Lower leg skin (tissue), 4 donors: ENCODE measurements at regions of chr6 and their contacts with region 1.

Region 1: GRCh38 chr6:166402582-166403277 is 20.0 kb upstream of the MPC1 start:
- DNase-seq: peak in 1 of 2 donors; percentile 54
- H3K4me3 ChIP-seq: no peak overlapping the region
- CTCF ChIP-seq: no peak
- POLR2A ChIP-seq: no peak

Region 2: DNA sequence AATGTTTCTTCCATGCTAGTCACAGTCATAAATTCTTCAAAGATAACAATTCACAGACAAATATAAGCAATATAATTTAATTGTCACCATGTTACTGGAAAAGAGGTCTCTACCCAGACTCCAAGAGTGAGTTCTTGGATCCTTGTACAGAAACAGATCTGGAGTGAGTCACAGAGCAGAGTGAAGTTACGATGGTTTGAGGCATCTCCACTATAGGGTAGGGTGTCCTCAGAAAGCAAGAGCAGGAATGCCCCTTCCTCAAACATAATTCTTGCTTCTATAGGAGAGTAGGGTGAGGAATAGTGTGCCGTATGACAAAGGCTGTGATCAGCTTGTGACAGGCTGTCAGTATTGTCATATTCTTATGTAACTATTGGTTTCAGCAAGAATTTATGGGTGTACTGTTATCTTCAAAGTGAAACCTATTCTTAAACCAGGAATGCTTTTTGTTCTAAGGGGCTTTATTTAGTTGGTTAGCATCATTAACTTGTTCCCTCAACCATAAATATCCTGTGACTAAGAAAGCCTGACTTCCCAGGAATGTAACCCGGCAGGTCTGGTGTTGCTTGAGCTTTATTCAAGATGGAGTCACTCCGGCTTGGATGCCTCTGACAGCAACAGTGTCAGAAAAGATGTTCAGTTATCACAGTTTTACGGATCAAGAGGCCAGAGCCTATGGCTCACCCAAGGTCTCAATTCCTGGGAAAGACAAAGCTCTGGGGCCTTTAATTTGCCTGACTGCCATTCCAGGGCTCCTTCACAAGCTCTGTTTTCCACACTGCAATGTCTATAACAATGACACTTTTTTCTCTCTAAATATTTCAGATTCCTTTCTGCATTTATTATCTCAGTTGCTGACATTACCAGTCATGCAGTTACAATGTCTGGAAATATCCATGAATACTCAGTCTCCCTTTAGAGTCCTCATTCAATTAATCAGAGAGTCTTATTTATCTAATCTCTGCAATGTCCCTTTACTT is 1391.9 kb before region 1 on chr6:
- intact Hi-C with region 1: no loop called
- DNase-seq: no peak
- H3K4me3 ChIP-seq: no peak overlapping the region
- CTCF ChIP-seq: no peak
- POLR2A ChIP-seq: no peak

Region 3: GRCh38 chr6:166275714-166276166 is 127.0 kb before region 1 on chr6:
- intact Hi-C with region 1: loop called (anchors 5 kb)
- DNase-seq: peak; percentile 32 to 93
- H3K4me3 ChIP-seq: no peak overlapping the region
- CTCF ChIP-seq: peak in 2 of 3 donors; percentile 61 to 74
- POLR2A ChIP-seq: no peak